PC-9 (cell line): ENCODE measurements at regions of chr19 and their contacts with region 1.

Region 1: DNA sequence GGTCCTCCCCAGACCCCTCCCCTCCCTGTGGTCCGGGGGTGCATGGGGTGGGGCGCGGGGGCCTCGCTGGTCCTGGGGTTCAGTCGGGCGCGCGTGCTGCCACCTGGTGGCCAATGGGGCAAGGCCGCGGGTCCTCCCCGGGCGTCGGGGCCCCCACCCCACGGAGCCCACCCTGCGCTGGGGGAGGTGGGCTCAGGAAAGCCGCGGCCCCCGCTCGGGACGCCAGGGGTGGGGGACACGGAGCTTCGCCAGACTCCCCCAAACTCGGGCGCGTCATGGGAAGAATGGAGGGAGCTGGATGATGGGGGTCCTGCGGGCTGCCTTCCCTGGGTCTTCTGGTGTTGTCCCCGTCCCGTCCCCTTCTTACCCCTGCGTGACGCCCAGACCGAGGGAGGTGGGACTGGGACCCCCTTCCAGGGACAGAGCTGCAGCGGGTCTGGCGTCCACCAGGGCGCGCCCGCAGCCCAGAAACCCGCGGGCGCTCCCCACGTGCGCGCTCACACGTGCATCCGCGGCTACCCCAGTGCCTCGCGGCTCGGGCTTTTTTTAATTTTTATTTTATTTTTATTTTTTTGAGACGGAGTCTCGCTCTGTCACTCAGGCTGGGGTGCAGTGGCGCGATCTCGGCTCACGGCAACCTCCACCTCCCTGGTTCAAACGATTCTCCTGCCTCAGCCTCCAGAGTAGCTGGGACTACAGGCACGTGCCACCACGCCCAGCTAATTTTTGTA is 19.8 kb upstream of the TCF3 start:
- DNase-seq: peak in 1 of 2 experiments; percentile 38
- H3K4me3 ChIP-seq: peak overlapping the region; percentile 52; the same call in 1 of the 2 replicates
- H3K27ac ChIP-seq: no peak overlapping the region
- H3K4me1 ChIP-seq: no peaks in the 10 kb centered on the region
- H3K27me3 ChIP-seq: no peaks in the 10 kb centered on the region
- CTCF ChIP-seq: peak; percentile 96

Region 2: DNA sequence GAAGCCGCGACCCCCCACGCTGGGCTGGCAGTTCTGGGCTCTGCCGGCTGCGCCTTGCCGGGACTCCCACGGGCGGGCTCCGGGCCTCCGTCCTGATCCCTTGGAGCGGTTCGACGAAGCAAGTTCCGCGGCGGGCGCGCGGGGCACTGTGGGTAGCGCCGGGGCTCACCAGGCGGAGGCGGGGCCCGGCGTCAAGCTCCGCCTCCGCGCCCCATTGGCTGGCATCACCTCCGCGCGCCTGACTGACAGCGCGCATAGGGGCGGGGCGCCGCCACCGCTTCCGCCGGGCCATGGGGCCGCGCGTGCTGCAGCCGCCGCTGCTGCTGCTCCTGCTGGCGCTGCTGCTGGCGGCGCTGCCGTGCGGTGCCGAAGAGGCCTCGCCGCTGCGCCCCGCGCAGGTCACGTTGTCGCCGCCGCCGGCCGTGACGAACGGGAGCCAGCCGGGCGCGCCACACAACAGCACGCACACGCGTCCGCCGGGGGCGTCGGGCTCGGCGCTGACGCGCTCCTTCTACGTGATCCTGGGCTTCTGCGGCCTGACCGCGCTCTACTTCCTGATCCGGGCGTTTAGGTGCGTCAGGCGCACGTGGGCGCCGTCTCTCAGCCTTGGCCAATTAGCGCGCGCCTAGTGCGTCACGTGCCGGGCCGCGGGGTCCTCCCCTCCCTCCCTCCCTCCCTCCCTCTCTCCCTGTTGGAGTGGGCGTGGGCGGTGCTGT is 396.8 kb before region 1 on chr19 and contains the start of gene FAM174C:
- CTCF ChIA-PET with region 1: no interaction called
- POLR2A ChIA-PET with region 1: no interaction called
- intact Hi-C with region 1: loop called (anchors 5 kb)
- DNase-seq: peak; percentile 84 to 87
- H3K4me3 ChIP-seq: peak within 1 kb of the TSS; percentile 78
- H3K27ac ChIP-seq: peak within 1 kb of the TSS; percentile 86
- H3K4me1 ChIP-seq: peaks cover 27% of the 10 kb centered on the region
- H3K27me3 ChIP-seq: no peaks in the 10 kb centered on the region
- CTCF ChIP-seq: no peak
- total RNA-seq, gene FAM174C: 51.8 and 64.2 TPM in 2 replicates

Region 3: DNA sequence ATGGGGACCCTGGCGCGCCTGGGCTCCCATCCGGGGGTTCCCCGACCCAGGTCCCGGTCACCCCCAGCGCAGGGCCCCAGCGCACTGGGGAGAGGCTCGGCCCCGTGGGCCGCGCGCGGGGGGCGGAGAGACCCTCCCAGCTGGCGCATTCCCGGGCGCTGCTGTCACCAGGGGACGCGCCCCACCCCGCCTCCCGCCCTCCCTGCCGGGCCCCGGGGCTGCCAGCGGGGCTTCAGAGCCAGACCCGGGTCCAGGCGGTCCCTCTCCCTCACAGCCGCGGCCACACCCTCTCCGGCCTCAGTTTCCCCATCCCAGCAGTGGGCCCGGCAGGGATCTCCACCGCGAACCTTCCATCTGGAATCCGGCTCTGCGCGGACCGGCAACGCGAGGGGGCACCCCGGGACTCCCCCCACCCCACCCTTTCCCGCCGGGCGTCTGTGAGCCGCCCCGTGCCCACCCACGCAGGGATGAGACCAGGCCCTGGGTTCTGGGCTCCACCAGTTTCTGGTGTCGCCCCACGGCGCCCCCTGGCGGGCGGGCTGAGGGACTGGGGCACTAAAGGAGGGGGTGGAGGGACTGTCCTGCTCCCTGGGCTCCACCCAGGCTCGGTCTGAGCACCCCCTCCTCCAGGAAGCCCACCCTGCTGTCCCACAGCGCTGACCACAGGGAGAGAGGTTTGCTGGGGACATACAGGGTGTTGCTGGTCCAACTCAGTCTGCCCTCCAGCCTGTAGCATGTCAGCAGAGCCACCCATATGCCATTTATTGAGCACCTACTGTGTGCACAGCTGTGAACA is 158.5 kb before region 1 on chr19:
- CTCF ChIA-PET with region 1: interaction called, 16 read pairs
- POLR2A ChIA-PET with region 1: no interaction called
- intact Hi-C with region 1: no loop called
- DNase-seq: peak in 1 of 2 experiments; percentile 62
- H3K4me3 ChIP-seq: peak overlapping the region; percentile 69
- H3K27ac ChIP-seq: no peak overlapping the region
- H3K4me1 ChIP-seq: no peaks in the 10 kb centered on the region; the same call in 1 of the 2 replicates
- H3K27me3 ChIP-seq: no peaks in the 10 kb centered on the region
- CTCF ChIP-seq: peak; percentile 75

Region 4: GRCh38 chr19:1634242-1634937 is 37.8 kb before region 1 on chr19:
- CTCF ChIA-PET with region 1: interaction called, 14 read pairs
- POLR2A ChIA-PET with region 1: no interaction called
- intact Hi-C with region 1: no loop called
- DNase-seq: no peak
- H3K4me3 ChIP-seq: no peak overlapping the region
- H3K27ac ChIP-seq: no peak overlapping the region
- H3K4me1 ChIP-seq: no peaks in the 10 kb centered on the region
- H3K27me3 ChIP-seq: no peaks in the 10 kb centered on the region
- CTCF ChIP-seq: no peak

Region 5: GRCh38 chr19:1767464-1767933 is 95.3 kb after region 1 on chr19:
- CTCF ChIA-PET with region 1: interaction called, 3 read pairs
- POLR2A ChIA-PET with region 1: no interaction called
- intact Hi-C with region 1: loop called (anchors 1 kb)
- DNase-seq: peak in 1 of 2 experiments; percentile 49
- H3K4me3 ChIP-seq: no peak overlapping the region
- H3K27ac ChIP-seq: no peak overlapping the region
- H3K4me1 ChIP-seq: no peaks in the 10 kb centered on the region
- H3K27me3 ChIP-seq: no peaks in the 10 kb centered on the region
- CTCF ChIP-seq: peak; percentile 91

Region 6: DNA sequence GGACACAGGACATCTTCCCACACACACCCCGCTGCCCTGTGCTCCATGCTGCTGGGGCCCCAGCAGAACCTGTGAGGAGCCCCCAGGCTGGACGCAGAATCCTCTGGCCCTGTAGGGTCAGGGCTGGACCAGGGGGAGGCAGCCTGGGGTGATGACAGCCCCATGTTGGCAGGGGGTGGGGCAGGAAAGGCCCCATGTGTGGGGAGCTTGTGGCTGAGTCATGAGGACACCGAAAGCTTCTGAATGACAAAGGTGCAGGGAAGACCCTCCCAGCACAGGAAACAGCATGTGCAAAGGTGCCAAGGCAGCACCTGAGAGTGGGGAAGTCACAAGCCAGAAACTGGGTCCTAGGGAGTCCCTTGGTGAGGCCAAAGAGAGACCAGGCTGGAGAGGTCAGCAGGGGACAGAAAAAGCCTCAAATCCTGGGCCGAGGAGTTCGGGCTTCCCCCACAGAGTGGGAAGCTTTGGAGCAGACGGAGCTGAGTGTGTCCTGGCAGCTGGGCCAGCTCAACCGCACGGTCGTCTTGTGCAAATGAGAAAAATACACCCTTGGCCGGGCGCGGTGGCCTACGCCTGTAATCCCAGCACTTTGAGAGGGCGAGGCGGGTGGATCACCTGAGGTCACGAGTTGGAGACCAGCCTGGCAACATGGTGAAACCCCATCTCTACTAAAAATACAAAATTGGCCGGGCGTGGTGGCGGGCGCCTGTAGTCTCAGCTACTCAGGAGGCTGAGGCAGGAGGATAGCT is 122.4 kb after region 1 on chr19:
- CTCF ChIA-PET with region 1: no interaction called
- POLR2A ChIA-PET with region 1: no interaction called
- intact Hi-C with region 1: loop called (anchors 1 kb)
- DNase-seq: no peak
- H3K4me3 ChIP-seq: no peak overlapping the region
- H3K27ac ChIP-seq: no peak overlapping the region
- H3K4me1 ChIP-seq: no peaks in the 10 kb centered on the region
- H3K27me3 ChIP-seq: no peaks in the 10 kb centered on the region; the same call in 1 of the 2 replicates
- CTCF ChIP-seq: no peak

Region 7: DNA sequence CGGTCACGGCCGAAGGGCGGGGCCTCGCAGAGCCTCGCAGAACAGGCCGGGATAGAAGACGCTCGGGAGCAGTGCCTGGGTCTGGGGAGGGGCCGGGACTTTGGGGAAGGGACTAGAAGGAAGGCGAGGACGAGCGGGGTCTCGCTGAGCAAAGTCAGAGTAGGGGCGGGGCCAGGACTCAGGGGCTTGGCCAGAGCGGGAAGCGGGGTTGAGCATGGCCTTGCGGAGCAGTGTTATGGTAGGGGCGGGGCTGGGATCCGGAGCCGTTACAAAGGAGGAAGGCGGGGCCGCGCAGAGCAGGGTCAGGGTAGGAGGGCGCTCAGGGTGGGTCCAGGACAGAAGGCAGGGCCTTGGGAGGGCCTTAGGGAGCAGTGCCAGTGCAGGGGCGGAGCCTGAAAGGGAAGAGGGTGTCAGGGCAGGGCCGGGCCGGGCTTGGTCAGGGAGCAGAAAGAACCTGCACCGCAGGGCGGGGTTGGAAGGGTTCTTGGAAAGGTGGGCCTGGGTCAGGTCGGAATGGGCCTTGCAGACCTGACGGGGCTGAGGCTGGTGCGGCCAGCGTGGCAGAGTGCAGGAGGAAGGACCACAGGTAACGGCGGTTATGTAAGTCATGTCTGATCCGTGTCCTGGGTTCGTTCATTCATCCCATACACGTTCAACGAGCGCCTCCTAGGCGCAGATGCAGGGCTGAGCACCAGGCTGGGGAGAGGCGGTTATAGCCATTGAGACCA is 140.4 kb after region 1 on chr19:
- CTCF ChIA-PET with region 1: no interaction called
- POLR2A ChIA-PET with region 1: no interaction called
- intact Hi-C with region 1: loop called (anchors 5 kb)
- DNase-seq: peak; percentile 79 to 94
- H3K4me3 ChIP-seq: peak overlapping the region; percentile 60
- H3K27ac ChIP-seq: no peak overlapping the region
- H3K4me1 ChIP-seq: peaks cover 4% of the 10 kb centered on the region; the same call in 1 of the 2 replicates
- H3K27me3 ChIP-seq: no peaks in the 10 kb centered on the region
- CTCF ChIP-seq: peak; percentile 68